ENCODE measurements at regions of chr6 and their contacts with region 1.

Region 1: DNA sequence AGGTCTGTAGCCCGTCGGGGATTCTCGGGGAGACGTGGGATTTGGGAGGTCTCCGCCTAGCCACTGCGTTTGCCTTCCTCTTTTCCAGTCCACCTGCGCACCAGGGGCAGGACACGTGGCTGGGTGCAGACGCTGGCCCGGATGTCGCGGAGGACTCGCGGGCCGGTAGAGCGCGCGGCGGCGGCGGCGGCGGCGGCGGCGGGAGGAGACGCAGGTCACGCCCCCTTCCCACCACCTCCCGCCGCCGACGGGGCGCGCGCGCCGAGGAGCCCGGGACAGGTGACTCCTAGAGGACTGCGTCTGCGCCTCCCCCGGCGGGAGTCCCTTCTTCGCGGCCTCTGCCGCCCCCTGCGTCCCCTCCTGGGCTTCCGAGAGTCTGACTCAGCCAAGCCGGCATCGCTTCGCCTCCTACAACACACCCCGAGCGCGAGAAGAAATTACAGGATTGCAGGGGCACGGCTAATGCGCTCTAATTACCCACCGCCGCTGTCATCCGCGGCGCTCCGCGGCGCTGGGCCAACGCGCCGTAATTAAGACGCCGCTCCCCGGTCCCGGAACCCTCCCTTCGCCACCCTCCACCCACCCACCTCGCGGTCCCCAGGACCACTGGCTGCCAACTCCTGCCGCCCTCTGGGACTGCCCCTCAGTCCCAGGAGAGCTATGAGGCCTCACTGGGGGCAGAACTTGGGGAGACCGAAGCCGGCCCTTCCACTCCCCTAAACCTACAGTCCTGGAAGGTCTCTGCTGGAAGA is 124.5 kb downstream of the MRPL14 start:
- DNase-seq: peak; percentile 89 to 90
- H3K4me3 ChIP-seq: peak overlapping the region in 1 of 3 donors; percentile 34
- H3K27ac ChIP-seq: peak overlapping the region; percentile 62 to 91 (median 81)
- H3K4me1 ChIP-seq: peaks cover 40 to 62% of the 10 kb centered on the region in 2 donors
- H3K27me3 ChIP-seq: no peaks in the 10 kb centered on the region
- CTCF ChIP-seq: peak in 3 of 6 experiments; percentile 6 to 37 (median 17)
- POLR2A ChIP-seq: peak in 1 of 2 donors; percentile 68

Region 2: DNA sequence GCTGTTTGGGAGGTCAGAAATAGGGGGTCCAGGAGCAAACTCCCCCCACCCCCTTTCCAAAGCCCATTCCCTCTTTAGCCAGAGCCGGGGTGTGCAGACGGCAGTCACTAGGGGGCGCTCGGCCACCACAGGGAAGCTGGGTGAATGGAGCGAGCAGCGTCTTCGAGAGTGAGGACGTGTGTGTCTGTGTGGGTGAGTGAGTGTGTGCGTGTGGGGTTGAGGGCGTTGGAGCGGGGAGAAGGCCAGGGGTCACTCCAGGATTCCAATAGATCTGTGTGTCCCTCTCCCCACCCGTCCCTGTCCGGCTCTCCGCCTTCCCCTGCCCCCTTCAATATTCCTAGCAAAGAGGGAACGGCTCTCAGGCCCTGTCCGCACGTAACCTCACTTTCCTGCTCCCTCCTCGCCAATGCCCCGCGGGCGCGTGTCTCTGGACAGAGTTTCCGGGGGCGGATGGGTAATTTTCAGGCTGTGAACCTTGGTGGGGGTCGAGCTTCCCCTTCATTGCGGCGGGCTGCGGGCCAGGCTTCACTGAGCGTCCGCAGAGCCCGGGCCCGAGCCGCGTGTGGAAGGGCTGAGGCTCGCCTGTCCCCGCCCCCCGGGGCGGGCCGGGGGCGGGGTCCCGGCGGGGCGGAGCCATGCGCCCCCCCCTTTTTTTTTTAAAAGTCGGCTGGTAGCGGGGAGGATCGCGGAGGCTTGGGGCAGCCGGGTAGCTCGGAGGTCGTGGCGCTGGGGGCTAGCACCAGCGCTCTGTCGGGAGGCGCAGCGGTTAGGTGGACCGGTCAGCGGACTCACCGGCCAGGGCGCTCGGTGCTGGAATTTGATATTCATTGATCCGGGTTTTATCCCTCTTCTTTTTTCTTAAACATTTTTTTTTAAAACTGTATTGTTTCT is 233.0 kb before region 1 on chr6 and contains the start of gene VEGFA:
- intact Hi-C with region 1: loop called (anchors 5 kb)
- DNase-seq: peak; percentile 88 to 91
- H3K4me3 ChIP-seq: peak within 1 kb of the TSS; percentile 74 to 100 (median 83)
- H3K27ac ChIP-seq: peak within 1 kb of the TSS; percentile 93 to 98 (median 93)
- H3K4me1 ChIP-seq: peaks cover 5 to 9% of the 10 kb centered on the region in 2 donors
- H3K27me3 ChIP-seq: no peaks in the 10 kb centered on the region
- CTCF ChIP-seq: peak; percentile 87 to 99 (median 98)
- POLR2A ChIP-seq: peak; percentile 92 to 96
- total RNA-seq, gene VEGFA: 510 to 1,437 (median 630) TPM

Region 3: DNA sequence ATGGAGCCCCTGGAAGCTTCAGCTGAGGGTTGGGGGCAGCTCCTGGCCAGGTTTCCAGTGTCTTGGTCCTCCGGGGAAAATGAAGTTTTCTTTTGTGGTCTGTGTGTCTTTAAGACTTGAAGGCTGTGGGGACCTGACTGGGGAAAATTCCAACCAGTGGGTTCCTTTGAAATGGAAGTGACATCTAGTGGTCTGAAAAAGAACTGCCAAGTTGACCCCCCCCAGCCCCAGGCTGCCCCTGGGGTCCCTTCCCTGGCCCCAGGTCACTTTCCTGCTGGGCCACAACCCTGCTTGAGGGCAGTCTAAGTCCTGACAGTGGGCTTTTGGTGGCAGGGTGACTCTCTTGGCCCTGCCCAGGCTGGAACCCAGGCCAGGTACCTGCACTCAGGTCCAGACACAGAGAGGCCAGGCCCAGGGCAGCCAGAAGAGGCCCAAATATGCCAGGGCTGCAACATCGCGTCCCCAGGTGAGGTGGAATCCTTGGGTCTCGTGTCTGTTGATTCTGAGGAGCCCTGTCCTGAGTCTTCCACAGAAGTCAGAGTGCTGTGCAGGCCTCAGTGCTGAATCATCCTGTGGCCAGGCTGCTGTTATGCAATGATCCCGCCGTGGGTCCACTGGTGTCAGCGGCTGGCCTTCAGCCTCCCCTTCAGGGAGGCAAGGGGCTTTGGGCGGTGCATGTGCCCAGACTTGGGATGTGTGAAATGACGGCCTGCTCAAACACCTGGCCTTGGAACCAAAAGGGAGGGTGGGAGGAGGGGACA is 164.3 kb before region 1 on chr6:
- intact Hi-C with region 1: no loop called
- DNase-seq: peak; percentile 67 to 68
- H3K4me3 ChIP-seq: no peak overlapping the region
- H3K27ac ChIP-seq: peak overlapping the region; percentile 72 to 84 (median 73)
- H3K4me1 ChIP-seq: peaks cover 31 to 41% of the 10 kb centered on the region in 2 donors
- H3K27me3 ChIP-seq: no peaks in the 10 kb centered on the region
- CTCF ChIP-seq: peak; percentile 32 to 68 (median 52)
- POLR2A ChIP-seq: no peak

Region 4: DNA sequence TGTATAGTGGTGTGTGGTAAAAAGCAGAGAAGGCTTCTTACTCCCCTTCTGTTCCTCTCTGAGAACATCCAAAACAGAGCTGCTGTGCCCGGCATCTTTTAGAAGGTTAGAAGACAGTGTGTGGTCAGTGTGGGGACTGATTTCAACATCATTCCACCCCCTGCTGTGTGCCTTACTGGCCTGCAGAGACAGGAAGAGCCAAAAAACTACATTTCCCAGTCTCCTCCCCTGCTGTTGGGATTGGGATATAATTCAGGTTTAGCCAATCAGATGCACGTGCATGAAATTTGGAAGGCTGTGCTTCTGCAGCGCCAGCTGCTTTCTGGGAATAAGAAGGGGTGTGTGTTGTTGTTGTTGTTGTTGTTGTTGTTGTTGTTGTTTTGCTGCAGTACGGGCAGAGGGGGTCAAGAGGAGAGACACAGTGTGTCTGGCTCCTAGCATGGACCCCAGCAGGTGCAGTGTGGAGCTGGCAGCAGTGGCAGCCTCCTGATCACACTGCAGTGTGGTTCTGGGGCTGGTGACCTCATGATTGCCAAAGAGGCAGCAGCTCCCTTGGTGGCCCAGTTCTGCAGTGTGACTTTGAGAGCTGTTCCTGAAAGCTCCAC is 49.8 kb after region 1 on chr6:
- intact Hi-C with region 1: loop called (anchors 5 kb)
- DNase-seq: peak; percentile 46 to 48
- H3K4me3 ChIP-seq: no peak overlapping the region
- H3K27ac ChIP-seq: no peak overlapping the region
- H3K4me1 ChIP-seq: peaks cover 0 to 31% of the 10 kb centered on the region in 2 donors
- H3K27me3 ChIP-seq: no peaks in the 10 kb centered on the region
- CTCF ChIP-seq: no peak
- POLR2A ChIP-seq: no peak

Region 5: DNA sequence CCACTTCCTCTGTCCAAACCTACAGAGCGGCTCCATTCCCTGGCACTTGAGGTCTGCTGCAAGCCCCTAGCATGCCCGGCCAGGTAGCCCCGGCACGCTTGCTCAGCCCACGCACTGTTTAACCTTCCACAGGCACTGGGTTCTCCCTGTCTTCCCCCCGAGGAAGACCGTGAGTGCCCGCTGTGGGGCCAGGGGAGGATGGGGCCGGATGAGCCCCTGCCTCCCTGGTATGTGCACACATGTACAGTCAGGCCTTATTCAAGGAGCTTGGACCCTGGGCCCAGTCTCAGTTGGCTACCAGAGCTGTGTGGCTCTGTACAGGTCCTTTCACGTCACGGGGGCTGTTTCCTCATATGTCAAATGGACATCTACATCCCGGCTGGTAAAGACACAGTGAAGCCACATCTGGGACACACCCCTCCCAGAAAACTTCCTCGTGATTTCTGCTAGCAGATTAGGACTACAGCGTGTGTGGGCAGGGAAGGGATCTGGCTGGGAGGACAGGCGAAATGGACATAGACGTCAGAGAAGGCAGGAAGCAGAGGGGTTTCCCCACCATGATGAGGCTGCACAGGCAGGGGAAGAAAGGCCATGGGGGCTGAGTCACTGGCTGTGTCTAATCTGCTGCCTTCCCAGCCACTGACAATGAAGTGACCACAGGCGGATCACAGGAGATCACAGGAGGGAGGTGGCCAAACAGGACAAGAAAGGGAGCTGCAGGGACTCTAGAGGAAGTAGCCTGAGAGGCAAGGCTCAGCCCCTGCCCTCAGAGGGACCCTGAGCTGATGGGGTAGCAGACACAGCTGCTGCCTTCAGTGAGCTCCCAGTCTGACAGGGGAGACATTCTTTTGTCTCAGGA is 61.5 kb after region 1 on chr6:
- intact Hi-C with region 1: loop called (anchors 5 kb)
- DNase-seq: no peak
- H3K4me3 ChIP-seq: no peak overlapping the region
- H3K27ac ChIP-seq: no peak overlapping the region
- H3K4me1 ChIP-seq: peaks cover 11 to 14% of the 10 kb centered on the region in 2 donors
- H3K27me3 ChIP-seq: no peaks in the 10 kb centered on the region
- CTCF ChIP-seq: no peak
- POLR2A ChIP-seq: no peak

Measured in thyroid gland (tissue), 4 donors.